Activated T-helper 2 cell treated with anti-CD3 and anti-CD28 coated beads, Interferon-gamma antibody, Interleukin-2, Interleukin-4, amounts not matched to agents 10 μg/mL and 5 μg/mL and 100 μg/mL, durations not matched to agents 14 hours and 24 hours and 36 hours (primary cell): ENCODE measurements at regions of chr2 and their contacts with region 1.

Region 1: GRCh38 chr2:73828818-73829570 is at the start of gene STAMBP:
- DNase-seq: peak; percentile 89
- H3K4me3 Mint-ChIP-seq: peak within 1 kb of the TSS; percentile 99
- H3K27ac Mint-ChIP-seq: peak within 1 kb of the TSS; percentile 98
- H3K4me1 Mint-ChIP-seq: peaks cover 44% of the 10 kb centered on the region
- H3K27me3 Mint-ChIP-seq: peaks cover 3% of the 10 kb centered on the region
- total RNA-seq, gene STAMBP: 54.3 and 63.4 TPM in 2 replicates

Region 2: GRCh38 chr2:73436019-73436418 is 393.0 kb before region 1 on chr2:
- intact Hi-C with region 1: no loop called
- DNase-seq: no peak
- H3K4me3 Mint-ChIP-seq: no peak overlapping the region
- H3K27ac Mint-ChIP-seq: no peak overlapping the region
- H3K4me1 Mint-ChIP-seq: no peaks in the 10 kb centered on the region
- H3K27me3 Mint-ChIP-seq: no peaks in the 10 kb centered on the region

Region 3: GRCh38 chr2:73852020-73852419 is 23.0 kb after region 1 on chr2:
- intact Hi-C with region 1: loop called (anchors 1 kb)
- DNase-seq: no peak
- H3K4me3 Mint-ChIP-seq: no peak overlapping the region
- H3K27ac Mint-ChIP-seq: no peak overlapping the region
- H3K4me1 Mint-ChIP-seq: peaks cover 21% of the 10 kb centered on the region
- H3K27me3 Mint-ChIP-seq: no peaks in the 10 kb centered on the region

Region 4: GRCh38 chr2:73886357-73886756 is 57.4 kb after region 1 on chr2:
- intact Hi-C with region 1: loop called (anchors 2 kb)
- DNase-seq: no peak
- H3K4me3 Mint-ChIP-seq: no peak overlapping the region
- H3K27ac Mint-ChIP-seq: peak overlapping the region; percentile 77
- H3K4me1 Mint-ChIP-seq: peaks cover 22% of the 10 kb centered on the region
- H3K27me3 Mint-ChIP-seq: no peaks in the 10 kb centered on the region

Region 5: DNA sequence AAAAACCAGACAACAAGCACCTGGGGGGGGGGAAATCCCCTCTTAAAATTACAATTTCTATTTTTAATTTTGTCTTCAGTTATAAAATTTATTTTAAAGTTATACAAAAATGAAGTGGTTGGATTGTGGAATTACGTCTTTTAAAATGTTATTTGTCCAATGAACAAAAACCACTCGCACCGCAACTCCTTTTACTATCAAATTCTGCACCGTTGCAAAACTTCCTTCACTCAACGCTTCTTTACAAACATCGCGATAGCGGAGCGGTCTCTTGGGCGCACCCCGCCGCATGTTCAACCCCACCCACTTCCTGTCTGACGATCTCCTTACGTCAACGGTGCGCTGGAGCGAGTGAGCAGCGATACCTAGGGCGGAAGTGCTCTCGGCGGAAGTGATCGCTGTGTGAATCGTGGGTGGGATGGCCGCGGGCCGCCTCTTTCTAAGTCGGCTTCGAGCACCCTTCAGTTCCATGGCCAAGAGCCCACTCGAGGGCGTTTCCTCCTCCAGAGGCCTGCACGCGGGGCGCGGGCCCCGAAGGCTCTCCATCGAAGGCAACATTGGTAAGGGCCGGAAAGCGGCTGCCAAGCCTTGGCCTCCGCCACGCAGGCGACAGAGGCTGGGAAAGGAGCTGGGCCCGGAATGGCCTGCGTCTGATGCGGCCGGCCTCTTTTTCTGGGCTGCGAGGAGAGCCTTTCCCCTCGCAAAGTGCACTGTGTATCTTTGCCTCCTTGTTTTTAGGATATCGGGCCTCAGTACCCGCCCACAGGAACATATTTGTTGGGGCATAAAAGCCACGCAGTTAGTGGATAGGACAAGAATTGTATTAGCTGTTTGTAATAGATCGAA is 97.7 kb after region 1 on chr2 and contains the start of gene DGUOK:
- intact Hi-C with region 1: loop called (anchors 1 kb)
- DNase-seq: peak; percentile 98
- H3K4me3 Mint-ChIP-seq: peak within 1 kb of the TSS; percentile 89
- H3K27ac Mint-ChIP-seq: peak within 1 kb of the TSS; percentile 94
- H3K4me1 Mint-ChIP-seq: peaks cover 49% of the 10 kb centered on the region
- H3K27me3 Mint-ChIP-seq: no peaks in the 10 kb centered on the region
- total RNA-seq, gene DGUOK: 86.8 and 90.9 TPM in 2 replicates

Region 6: GRCh38 chr2:73985308-73986084 is 156.5 kb after region 1 on chr2:
- intact Hi-C with region 1: loop called (anchors 1 kb)
- DNase-seq: peak; percentile 40
- H3K4me3 Mint-ChIP-seq: peak overlapping the region; percentile 86
- H3K27ac Mint-ChIP-seq: peak overlapping the region; percentile 80
- H3K4me1 Mint-ChIP-seq: peaks cover 64% of the 10 kb centered on the region
- H3K27me3 Mint-ChIP-seq: no peaks in the 10 kb centered on the region

Region 7: GRCh38 chr2:74147727-74148456 is 318.9 kb after region 1 on chr2 and contains the start of gene BOLA3:
- intact Hi-C with region 1: loop called (anchors 1 kb)
- DNase-seq: peak; percentile 84
- H3K4me3 Mint-ChIP-seq: no peak within 1 kb of the TSS
- H3K27ac Mint-ChIP-seq: no peak within 1 kb of the TSS
- H3K4me1 Mint-ChIP-seq: peaks cover 1% of the 10 kb centered on the region
- H3K27me3 Mint-ChIP-seq: no peaks in the 10 kb centered on the region
- total RNA-seq, gene BOLA3: 91.2 and 92.7 TPM in 2 replicates